ENCODE measurements at regions of chr12 and their contacts with region 1.

Region 1: GRCh38 chr12:15074351-15074750 is 101.5 kb downstream of the PDE6H start:
- DNase-seq: no peak
- ATAC-seq: no peak
- H3K4me3 ChIP-seq: no peak overlapping the region
- H3K27ac ChIP-seq: no peak overlapping the region
- H3K4me1 ChIP-seq: no peaks in the 10 kb centered on the region
- H3K27me3 ChIP-seq: peaks cover 4% of the 10 kb centered on the region
- CTCF ChIP-seq: no peak

Region 2: DNA sequence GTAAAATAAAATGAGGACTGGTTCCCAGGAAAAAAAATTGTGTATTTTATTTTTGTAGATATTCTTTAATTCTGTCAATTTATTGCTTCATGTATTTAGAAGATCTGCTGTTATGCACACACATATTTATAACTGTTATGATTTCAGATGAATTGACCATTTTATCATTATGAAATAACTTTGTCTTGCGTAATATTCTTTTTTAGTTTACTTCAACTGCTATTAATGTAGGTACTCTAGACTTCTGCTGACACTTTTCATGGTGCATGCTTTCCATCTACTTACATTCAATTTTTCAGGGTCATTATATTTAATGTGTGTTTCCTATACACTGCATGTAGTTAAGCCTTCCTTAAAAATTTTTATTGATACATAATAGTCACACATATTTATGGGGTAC is 15.2 kb before region 1 on chr12:
- CTCF ChIA-PET with region 1: no interaction called
- POLR2A ChIA-PET with region 1: no interaction called
- intact Hi-C with region 1: loop called (anchors 1 kb)
- DNase-seq: no peak
- ATAC-seq: no peak
- H3K4me3 ChIP-seq: no peak overlapping the region
- H3K27ac ChIP-seq: no peak overlapping the region
- H3K4me1 ChIP-seq: no peaks in the 10 kb centered on the region
- H3K27me3 ChIP-seq: peaks cover 58% of the 10 kb centered on the region
- CTCF ChIP-seq: no peak

Measured in PC-3 (cell line).